Activated CD8-positive, alpha-beta T cell treated with anti-CD3 and anti-CD28 coated beads for 36 hours (primary cell): ENCODE measurements at regions of chr12 and their contacts with region 1.

Region 1: GRCh38 chr12:40107098-40107802 is 1.4 kb upstream of the SLC2A13 start:
- DNase-seq: peak; percentile 96
- ATAC-seq: peak; percentile 32
- H3K4me3 Mint-ChIP-seq: peak overlapping the region; percentile 68
- H3K27ac Mint-ChIP-seq: no peak overlapping the region
- H3K4me1 Mint-ChIP-seq: peaks cover 34% of the 10 kb centered on the region
- H3K27me3 Mint-ChIP-seq: peaks cover 6% of the 10 kb centered on the region
- CTCF ChIP-seq: peak; percentile 83

Region 2: DNA sequence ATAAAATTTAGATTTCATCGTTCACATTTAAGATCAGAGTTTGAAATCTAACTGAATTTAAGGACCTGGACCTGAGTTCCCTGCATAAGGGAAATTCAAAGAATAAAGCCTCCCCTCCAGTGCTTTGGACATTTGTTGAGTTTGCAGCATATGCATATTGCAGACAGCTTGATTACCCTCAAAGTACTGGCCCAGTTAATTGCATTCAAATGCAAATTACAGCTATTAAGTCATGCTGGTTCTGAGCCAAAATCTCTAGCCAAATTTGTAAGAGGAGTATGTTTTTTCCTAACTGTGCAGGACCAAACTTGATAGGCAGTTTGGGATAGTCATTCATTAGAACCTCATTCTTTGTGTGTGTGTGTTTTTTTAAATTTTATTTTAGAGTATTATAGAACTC is 655.3 kb before region 1 on chr12:
- CTCF ChIA-PET with region 1: no interaction called
- POLR2A ChIA-PET with region 1: no interaction called
- intact Hi-C with region 1: no loop called
- DNase-seq: no peak
- ATAC-seq: no peak
- H3K4me3 Mint-ChIP-seq: no peak overlapping the region
- H3K27ac Mint-ChIP-seq: no peak overlapping the region
- H3K4me1 Mint-ChIP-seq: no peaks in the 10 kb centered on the region
- H3K27me3 Mint-ChIP-seq: no peaks in the 10 kb centered on the region
- CTCF ChIP-seq: no peak

Region 3: DNA sequence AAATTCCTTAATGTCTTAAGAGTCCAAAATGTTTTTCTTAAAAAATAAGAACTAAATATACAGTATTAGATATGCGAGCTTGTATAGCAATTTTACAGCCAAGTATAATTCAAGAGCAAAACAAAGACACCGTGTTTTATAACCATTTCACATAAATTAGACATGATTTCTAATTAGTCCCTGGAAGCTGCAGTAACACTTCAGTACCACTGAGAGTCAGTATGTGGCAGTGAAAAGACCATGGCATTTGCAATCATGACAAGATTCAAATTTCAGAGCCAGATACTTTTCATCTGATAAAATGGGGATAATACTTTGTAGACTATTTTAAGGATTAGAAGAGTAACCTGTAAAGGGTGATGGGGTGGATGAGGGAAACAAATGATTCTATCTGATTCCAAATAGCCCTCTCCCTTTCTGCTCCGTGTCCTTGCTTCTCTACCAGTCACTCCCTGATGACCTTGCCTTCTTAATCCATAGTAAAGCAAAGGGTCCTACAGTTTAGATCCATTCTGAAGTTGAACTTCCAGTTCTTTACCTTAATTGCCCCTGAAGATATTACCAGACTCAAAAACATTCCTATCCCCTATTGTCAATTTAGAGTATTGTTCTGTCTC is 342.2 kb before region 1 on chr12:
- CTCF ChIA-PET with region 1: no interaction called
- POLR2A ChIA-PET with region 1: no interaction called
- intact Hi-C with region 1: loop called (anchors 2 kb)
- DNase-seq: no peak
- ATAC-seq: peak; percentile 64
- H3K4me3 Mint-ChIP-seq: no peak overlapping the region
- H3K27ac Mint-ChIP-seq: no peak overlapping the region
- H3K4me1 Mint-ChIP-seq: no peaks in the 10 kb centered on the region
- H3K27me3 Mint-ChIP-seq: no peaks in the 10 kb centered on the region
- CTCF ChIP-seq: peak; percentile 84

Region 4: GRCh38 chr12:40044396-40044795 is 62.9 kb before region 1 on chr12:
- CTCF ChIA-PET with region 1: no interaction called
- POLR2A ChIA-PET with region 1: no interaction called
- intact Hi-C with region 1: no loop called
- DNase-seq: no peak
- ATAC-seq: no peak
- H3K4me3 Mint-ChIP-seq: no peak overlapping the region
- H3K27ac Mint-ChIP-seq: no peak overlapping the region
- H3K4me1 Mint-ChIP-seq: peaks cover 6% of the 10 kb centered on the region
- H3K27me3 Mint-ChIP-seq: no peaks in the 10 kb centered on the region
- CTCF ChIP-seq: no peak

Region 5: DNA sequence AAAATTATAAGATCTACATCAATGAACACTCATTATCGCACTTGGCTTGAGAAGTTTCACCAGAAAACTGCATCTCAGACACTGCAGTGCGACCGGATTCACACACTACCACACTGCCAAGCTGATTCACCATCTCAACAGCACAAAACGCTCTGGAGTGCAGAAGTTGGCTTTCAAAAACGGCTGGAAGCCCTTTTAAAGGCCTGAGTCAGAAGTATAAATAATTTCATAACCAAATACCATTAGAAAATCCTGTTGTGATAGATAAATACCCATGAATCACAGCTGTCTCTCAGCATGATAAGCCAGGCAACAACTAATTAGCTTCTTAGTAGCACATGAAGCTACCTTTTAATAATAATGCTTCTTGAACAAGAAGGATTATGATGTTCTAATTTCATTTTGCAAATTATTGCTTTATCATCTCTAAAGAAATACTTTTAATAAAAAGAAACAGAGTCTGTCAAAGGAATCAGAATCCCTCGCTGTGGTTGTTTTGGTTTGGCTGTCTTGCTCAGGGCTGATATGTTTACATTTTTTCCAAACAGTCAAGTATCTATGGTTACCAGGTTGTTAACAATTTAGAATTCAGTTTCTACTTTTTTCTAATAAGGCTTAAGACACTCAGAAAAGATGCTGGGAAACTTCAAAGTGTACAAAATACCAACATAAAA is 52.6 kb before region 1 on chr12:
- CTCF ChIA-PET with region 1: no interaction called
- POLR2A ChIA-PET with region 1: no interaction called
- intact Hi-C with region 1: no loop called
- DNase-seq: no peak
- ATAC-seq: no peak
- H3K4me3 Mint-ChIP-seq: no peak overlapping the region
- H3K27ac Mint-ChIP-seq: no peak overlapping the region
- H3K4me1 Mint-ChIP-seq: no peaks in the 10 kb centered on the region
- H3K27me3 Mint-ChIP-seq: no peaks in the 10 kb centered on the region
- CTCF ChIP-seq: no peak

Region 6: GRCh38 chr12:40117818-40118217 is 10.6 kb after region 1 on chr12:
- CTCF ChIA-PET with region 1: interaction called, 40 read pairs
- POLR2A ChIA-PET with region 1: interaction called, 4 read pairs
- intact Hi-C with region 1: no loop called
- DNase-seq: no peak
- ATAC-seq: peak; percentile 27
- H3K4me3 Mint-ChIP-seq: no peak overlapping the region
- H3K27ac Mint-ChIP-seq: no peak overlapping the region
- H3K4me1 Mint-ChIP-seq: peaks cover 15% of the 10 kb centered on the region
- H3K27me3 Mint-ChIP-seq: peaks cover 15% of the 10 kb centered on the region
- CTCF ChIP-seq: no peak

Region 7: GRCh38 chr12:40144023-40144422 is 36.8 kb after region 1 on chr12:
- CTCF ChIA-PET with region 1: interaction called, 11 read pairs
- POLR2A ChIA-PET with region 1: no interaction called
- intact Hi-C with region 1: no loop called
- DNase-seq: no peak
- ATAC-seq: no peak
- H3K4me3 Mint-ChIP-seq: no peak overlapping the region
- H3K27ac Mint-ChIP-seq: no peak overlapping the region
- H3K4me1 Mint-ChIP-seq: no peaks in the 10 kb centered on the region
- H3K27me3 Mint-ChIP-seq: peaks cover 4% of the 10 kb centered on the region
- CTCF ChIP-seq: no peak